Dorsolateral prefrontal cortex (tissue), 120 donors: ENCODE measurements at regions of chr11 and their contacts with region 1.

Region 1: GRCh38 chr11:77557554-77557953 is 32.2 kb upstream of the AQP11 start:
- DNase-seq: peak in 3 of 10 donors; percentile 28 to 58 (median 56)
- H3K4me3 ChIP-seq: no peak overlapping the region
- H3K27ac ChIP-seq: no peak overlapping the region
- H3K27me3 ChIP-seq: no peaks in the 10 kb centered on the region
- CTCF ChIP-seq: peak in 47 of 56 donors; percentile 14 to 58 (median 38)

Region 2: DNA sequence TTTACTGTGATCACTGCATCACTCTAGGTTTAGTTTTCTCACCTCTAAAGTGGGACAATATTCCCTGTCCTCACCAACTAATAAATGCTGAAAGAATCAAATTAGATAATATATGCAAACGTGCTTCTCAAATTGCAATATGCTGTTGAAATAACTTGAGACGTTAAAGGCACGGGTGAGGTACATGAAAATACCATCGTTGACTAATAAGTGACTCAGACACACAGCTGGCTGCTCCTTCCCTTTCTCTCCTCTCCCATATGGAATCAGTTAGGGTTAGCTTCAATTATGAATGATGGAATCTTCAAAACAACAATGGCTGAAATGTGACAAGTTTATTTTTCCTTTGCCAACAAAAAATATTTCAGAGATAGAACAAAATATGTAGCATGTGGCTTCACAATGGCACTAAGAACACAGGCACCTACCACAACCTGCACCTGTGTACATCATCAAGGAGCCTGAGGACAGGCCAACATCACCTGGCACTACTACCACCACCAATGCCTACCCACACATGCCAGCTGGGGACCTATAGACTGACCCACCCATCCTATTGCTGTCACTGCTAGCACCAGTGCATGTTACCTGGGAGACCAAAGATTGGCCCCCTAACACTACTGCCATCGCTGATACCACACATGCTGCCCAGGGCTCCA is 269.8 kb before region 1 on chr11:
- intact Hi-C with region 1: loop called in 1 of 2 experiments (anchors 10 kb)
- DNase-seq: no peak
- H3K4me3 ChIP-seq: no peak overlapping the region
- H3K27ac ChIP-seq: no peak overlapping the region
- H3K27me3 ChIP-seq: peaks cover 0 to 4% (median 0%) of the 10 kb centered on the region in 45 donors
- CTCF ChIP-seq: no peak